Transverse colon (tissue), 4 donors: ENCODE measurements at regions of chr19 and their contacts with region 1.

Region 1: GRCh38 chr19:44770550-44771257 is 7.0 kb upstream of the CBLC start:
- DNase-seq: peak; percentile 98
- H3K4me3 ChIP-seq: no peak overlapping the region
- H3K27ac ChIP-seq: peak overlapping the region; percentile 24 to 60 (median 43)
- H3K4me1 ChIP-seq: peaks cover 0 to 42% (median 11%) of the 10 kb centered on the region in 4 donors
- H3K27me3 ChIP-seq: no peaks in the 10 kb centered on the region
- CTCF ChIP-seq: peak; percentile 82 to 97 (median 87)
- EP300 ChIP-seq: no peak
- POLR2A ChIP-seq: no peak

Region 2: GRCh38 chr19:44689056-44689895 is 81.4 kb before region 1 on chr19:
- in situ Hi-C with region 1: no loop called
- intact Hi-C with region 1: loop called (anchors 1 kb)
- DNase-seq: peak; percentile 85
- H3K4me3 ChIP-seq: no peak overlapping the region
- H3K27ac ChIP-seq: peak overlapping the region; percentile 34 to 69 (median 50)
- H3K4me1 ChIP-seq: peaks cover 3 to 46% (median 34%) of the 10 kb centered on the region in 4 donors
- H3K27me3 ChIP-seq: no peaks in the 10 kb centered on the region
- CTCF ChIP-seq: peak; percentile 89 to 96 (median 94)
- EP300 ChIP-seq: no peak
- POLR2A ChIP-seq: no peak

Region 3: DNA sequence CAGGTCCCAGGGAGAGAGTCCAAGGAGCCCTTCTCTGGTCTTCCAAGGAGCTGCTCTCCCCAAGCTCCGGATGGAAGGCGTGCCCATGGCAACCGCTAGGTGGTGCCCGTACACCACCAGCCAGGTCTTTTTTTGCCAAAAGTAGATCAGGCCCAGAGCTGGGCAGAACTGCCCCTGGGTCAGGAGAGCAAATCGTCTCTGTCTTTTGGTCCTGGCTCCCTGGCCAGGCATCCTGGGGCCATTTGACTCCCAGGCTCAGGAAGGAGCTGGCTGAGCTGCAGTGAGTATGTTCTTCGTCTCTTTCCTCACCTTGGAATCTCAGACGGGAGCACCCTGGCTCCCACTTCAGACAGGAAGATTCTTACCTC is 46.8 kb before region 1 on chr19:
- in situ Hi-C with region 1: loop called (anchors 5 kb)
- intact Hi-C with region 1: loop called (anchors 1 kb)
- DNase-seq: peak; percentile 90
- H3K4me3 ChIP-seq: peak overlapping the region in 2 of 4 donors; percentile 10 to 25
- H3K27ac ChIP-seq: peak overlapping the region; percentile 81 to 90 (median 82)
- H3K4me1 ChIP-seq: peaks cover 8 to 70% (median 40%) of the 10 kb centered on the region in 4 donors
- H3K27me3 ChIP-seq: no peaks in the 10 kb centered on the region
- CTCF ChIP-seq: peak; percentile 96 to 99 (median 97)
- EP300 ChIP-seq: no peak
- POLR2A ChIP-seq: peak; percentile 30